ENCODE measurements at regions of chr11 and their contacts with region 1.

Region 1: GRCh38 chr11:34051349-34052035 is at the start of gene CAPRIN1:
- DNase-seq: peak; percentile 84 to 92
- ATAC-seq: peak; percentile 73 to 88 (median 79)
- H3K4me3 ChIP-seq: peak within 1 kb of the TSS; percentile 62
- H3K4me3 Mint-ChIP-seq: peak within 1 kb of the TSS; percentile 99
- H3K27ac ChIP-seq: peak within 1 kb of the TSS; percentile 100
- H3K27ac Mint-ChIP-seq: peak within 1 kb of the TSS; percentile 95 to 96
- H3K4me1 ChIP-seq: peaks cover 15% of the 10 kb centered on the region
- H3K4me1 Mint-ChIP-seq: peaks cover 27 to 28% of the 10 kb centered on the region in 2 donors
- H3K27me3 ChIP-seq: no peaks in the 10 kb centered on the region
- H3K27me3 Mint-ChIP-seq: no peaks in the 10 kb centered on the region
- CTCF ChIP-seq: no peak
- total RNA-seq, gene CAPRIN1: 118 to 158 (median 137) TPM

Region 2: DNA sequence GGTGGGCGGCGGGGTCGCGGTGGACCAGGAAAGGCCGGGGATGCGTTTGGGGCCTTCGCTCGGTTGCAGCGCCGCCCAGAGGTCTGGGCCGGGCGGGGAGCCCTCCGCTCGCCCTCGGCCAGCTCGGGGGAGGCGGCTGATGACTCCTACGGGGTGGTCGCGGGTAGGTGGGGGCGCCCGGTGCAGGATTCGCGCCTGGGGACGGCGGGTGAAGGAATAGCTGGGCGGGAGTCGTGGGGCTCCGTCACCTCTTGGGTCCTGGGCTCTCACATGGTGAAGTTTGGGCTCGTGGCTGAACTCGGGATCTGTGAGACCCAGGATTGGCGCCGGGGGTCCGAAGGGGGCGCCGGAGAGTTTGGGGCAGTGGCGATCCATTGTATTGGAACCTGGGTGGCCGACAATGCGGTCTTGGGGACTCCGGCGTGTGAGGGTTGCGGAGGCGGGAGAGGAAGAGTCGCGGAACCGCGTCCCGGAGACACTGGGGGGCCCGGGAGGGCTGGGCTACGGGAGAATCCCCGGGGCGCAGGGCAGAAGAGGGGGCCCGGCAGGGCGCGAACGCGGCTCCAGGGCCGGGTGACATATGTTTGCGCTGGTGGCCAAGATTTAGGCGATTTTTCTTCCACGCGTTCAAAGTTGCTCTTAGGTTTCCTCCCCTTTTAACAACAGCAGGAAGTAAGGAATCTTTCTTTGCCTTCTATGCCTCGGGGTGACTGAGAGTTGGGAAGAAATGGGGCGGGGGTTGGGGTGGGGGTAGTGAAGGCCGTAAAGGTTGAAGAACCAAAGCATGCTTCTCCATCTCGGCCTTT is 1157.9 kb before region 1 on chr11:
- intact Hi-C with region 1: loop called (anchors 10 kb)
- DNase-seq: peak; percentile 57 to 70
- ATAC-seq: peak; percentile 40 to 70 (median 59)
- H3K4me3 ChIP-seq: peak overlapping the region; percentile 74
- H3K4me3 Mint-ChIP-seq: peak overlapping the region; percentile 94
- H3K27ac ChIP-seq: peak overlapping the region; percentile 51
- H3K27ac Mint-ChIP-seq: peak overlapping the region; percentile 59 to 93
- H3K4me1 ChIP-seq: peaks cover 11% of the 10 kb centered on the region
- H3K4me1 Mint-ChIP-seq: peaks cover 31 to 34% of the 10 kb centered on the region in 2 donors
- H3K27me3 ChIP-seq: no peaks in the 10 kb centered on the region
- H3K27me3 Mint-ChIP-seq: no peaks in the 10 kb centered on the region
- CTCF ChIP-seq: peak; percentile 44

Region 3: GRCh38 chr11:33039274-33040032 is 1012.0 kb before region 1 on chr11 and contains the start of gene TCP11L1:
- intact Hi-C with region 1: loop called (anchors 5 kb)
- DNase-seq: peak; percentile 78 to 89
- ATAC-seq: peak; percentile 88 to 94 (median 89)
- H3K4me3 ChIP-seq: peak within 1 kb of the TSS; percentile 99
- H3K4me3 Mint-ChIP-seq: peak within 1 kb of the TSS; percentile 96
- H3K27ac ChIP-seq: peak within 1 kb of the TSS; percentile 92
- H3K27ac Mint-ChIP-seq: peak within 1 kb of the TSS; percentile 90 to 93
- H3K4me1 ChIP-seq: peaks cover 12% of the 10 kb centered on the region
- H3K4me1 Mint-ChIP-seq: peaks cover 11% of the 10 kb centered on the region in 2 donors
- H3K27me3 ChIP-seq: no peaks in the 10 kb centered on the region
- H3K27me3 Mint-ChIP-seq: peaks cover 2 to 8% of the 10 kb centered on the region in 2 donors
- CTCF ChIP-seq: no peak
- total RNA-seq, gene TCP11L1: 20.7 to 24.5 (median 22.7) TPM

Region 4: DNA sequence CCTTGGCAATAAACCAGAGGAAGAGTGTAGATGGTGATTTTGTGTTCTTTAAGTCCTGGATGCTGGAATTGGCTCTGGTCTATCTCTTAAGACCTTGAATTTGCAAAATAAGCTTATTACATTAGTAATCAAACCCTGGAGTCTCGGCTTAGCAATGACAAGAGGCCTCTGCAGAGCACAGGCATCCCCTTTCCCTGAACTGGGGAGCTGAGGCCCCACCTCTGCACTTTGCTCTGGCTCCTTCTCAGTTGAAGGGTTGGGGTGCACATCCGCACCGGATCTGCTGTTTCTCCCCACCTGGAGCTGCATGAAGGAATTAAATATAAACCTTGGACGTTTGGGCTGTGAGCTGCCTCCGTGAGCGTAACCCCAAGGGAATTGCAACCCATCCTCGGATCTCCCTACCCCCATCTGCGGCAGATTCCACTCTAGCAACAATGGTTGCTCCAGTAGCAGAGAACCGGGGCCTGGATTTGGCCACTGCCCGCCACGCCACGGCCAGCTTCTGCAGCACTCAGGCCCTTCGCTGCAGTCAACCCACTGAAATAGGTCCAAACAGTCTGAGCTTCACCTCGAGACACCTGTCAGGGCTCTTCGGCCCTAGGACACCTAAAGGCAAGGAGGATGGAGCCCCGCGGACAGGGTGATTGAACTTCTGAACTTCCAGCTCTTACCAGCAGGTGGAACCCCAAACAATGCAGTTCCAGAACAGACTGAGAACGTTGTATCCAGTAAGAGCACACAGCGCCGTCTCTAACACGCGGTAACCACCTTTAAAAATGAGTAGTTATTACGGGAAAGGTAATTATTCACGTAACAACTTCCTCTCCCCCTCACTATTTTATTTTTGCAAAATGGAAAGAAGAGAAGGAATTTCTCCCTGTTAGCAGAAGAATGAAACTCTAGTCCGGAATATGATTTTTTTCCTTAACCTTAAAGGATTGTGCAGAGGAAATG is 54.7 kb before region 1 on chr11:
- intact Hi-C with region 1: loop called (anchors 2 kb)
- DNase-seq: peak; percentile 48 to 86
- ATAC-seq: peak; percentile 93 to 100 (median 100)
- H3K4me3 ChIP-seq: no peak overlapping the region
- H3K4me3 Mint-ChIP-seq: no peak overlapping the region
- H3K27ac ChIP-seq: no peak overlapping the region
- H3K27ac Mint-ChIP-seq: no peak overlapping the region
- H3K4me1 ChIP-seq: peaks cover 5% of the 10 kb centered on the region
- H3K4me1 Mint-ChIP-seq: peaks cover 7 to 10% of the 10 kb centered on the region in 2 donors
- H3K27me3 ChIP-seq: peaks cover 11% of the 10 kb centered on the region
- H3K27me3 Mint-ChIP-seq: peaks cover 19 to 22% of the 10 kb centered on the region in 2 donors
- CTCF ChIP-seq: peak; percentile 74

Region 5: DNA sequence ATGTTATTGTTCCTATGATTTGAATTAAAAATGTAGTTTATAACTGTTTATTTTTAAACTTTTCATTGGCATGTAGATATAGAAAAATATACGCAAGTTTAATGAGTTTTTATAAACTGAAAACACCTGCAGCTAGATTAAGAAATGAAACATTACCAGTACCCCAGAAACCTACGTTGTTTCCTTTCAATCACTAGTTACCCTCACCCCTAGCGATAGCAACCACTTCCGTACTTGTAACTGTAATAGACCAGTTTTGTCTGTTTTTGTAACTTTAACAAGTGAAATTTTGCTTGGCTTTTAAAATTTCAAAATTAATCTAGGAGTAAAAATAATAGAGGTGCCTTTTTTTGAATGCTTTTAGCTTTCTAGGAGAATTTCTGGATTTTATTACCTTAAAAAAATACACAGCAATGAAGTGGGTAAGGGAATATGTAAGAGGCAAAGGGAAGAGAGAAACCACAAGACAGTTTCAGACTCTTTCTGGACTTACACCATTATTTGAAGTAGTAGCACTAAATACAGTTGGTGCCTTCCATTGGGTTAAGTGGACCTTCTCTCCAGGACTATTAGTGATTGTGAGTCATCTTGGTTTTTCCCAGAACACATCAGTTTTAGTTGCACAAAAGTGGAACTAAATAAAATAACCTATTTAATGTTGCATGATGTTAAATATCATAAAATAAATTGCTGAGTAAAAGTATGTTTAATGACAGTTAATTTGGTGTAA is 35.2 kb after region 1 on chr11:
- intact Hi-C with region 1: loop called (anchors 5 kb)
- DNase-seq: peak in 1 of 2 donors; percentile 39
- ATAC-seq: peak; percentile 49 to 69 (median 65)
- H3K4me3 ChIP-seq: no peak overlapping the region
- H3K4me3 Mint-ChIP-seq: peak overlapping the region; percentile 35
- H3K27ac ChIP-seq: peak overlapping the region; percentile 34
- H3K27ac Mint-ChIP-seq: peak overlapping the region; percentile 78 to 81
- H3K4me1 ChIP-seq: no peaks in the 10 kb centered on the region
- H3K4me1 Mint-ChIP-seq: peaks cover 6 to 18% of the 10 kb centered on the region in 2 donors
- H3K27me3 ChIP-seq: no peaks in the 10 kb centered on the region
- H3K27me3 Mint-ChIP-seq: no peaks in the 10 kb centered on the region
- CTCF ChIP-seq: no peak

Region 6: GRCh38 chr11:34105079-34105956 is 53.8 kb after region 1 on chr11 and contains the start of gene NAT10:
- intact Hi-C with region 1: loop called (anchors 1 kb)
- DNase-seq: peak; percentile 96 to 100
- ATAC-seq: peak; percentile 93 to 98 (median 94)
- H3K4me3 ChIP-seq: peak within 1 kb of the TSS; percentile 82
- H3K4me3 Mint-ChIP-seq: peak within 1 kb of the TSS; percentile 96
- H3K27ac ChIP-seq: peak within 1 kb of the TSS; percentile 94
- H3K27ac Mint-ChIP-seq: peak within 1 kb of the TSS; percentile 96 to 97
- H3K4me1 ChIP-seq: peaks cover 16% of the 10 kb centered on the region
- H3K4me1 Mint-ChIP-seq: peaks cover 34 to 40% of the 10 kb centered on the region in 2 donors
- H3K27me3 ChIP-seq: no peaks in the 10 kb centered on the region
- H3K27me3 Mint-ChIP-seq: no peaks in the 10 kb centered on the region
- CTCF ChIP-seq: no peak
- total RNA-seq, gene NAT10: 40.3 to 53.6 (median 42.8) TPM

Measured in natural killer cell (primary cell).